Panc1 (cell line): ENCODE measurements at regions of chr11 and their contacts with region 1.

Region 1: DNA sequence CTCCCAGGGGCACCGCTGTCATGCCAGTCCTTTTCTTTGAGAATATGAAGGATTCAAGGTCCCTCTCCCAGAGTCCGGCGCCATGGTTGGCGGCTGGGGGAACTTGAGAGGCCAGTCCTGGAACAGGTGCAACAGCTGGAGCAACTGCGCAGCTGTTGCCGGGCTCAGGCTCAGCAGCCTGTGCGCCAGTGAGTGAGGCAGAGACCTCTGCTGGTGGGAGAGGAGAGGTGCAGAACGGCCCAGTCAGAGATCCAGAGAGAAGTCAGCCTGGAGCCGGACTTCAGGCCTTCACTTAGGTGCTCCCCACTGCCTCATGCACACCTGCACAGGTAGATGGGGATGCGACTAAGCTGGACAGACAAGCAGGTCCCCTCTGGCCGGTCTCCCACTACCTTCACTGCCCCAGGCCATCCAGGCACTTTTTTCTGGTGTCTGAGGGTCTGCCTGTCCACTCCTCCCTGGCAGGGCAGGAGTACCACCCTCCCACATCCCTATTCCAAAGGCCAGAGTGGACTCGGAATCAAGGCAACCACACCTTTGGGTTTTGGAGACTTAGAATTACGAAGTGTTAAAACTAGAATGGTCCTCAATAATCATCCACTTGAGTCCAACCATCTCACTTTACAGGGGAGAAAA is 4.6 kb downstream of the CHRDL2 start:
- DNase-seq: no peak
- ATAC-seq: peak; percentile 95
- H3K4me3 ChIP-seq: no peak overlapping the region
- H3K27ac ChIP-seq: no peak overlapping the region
- H3K4me1 ChIP-seq: 0 out of 2 replicates have a peak, but pooled peaks cover 4% of the 10 kb centered on the region
- H3K27me3 ChIP-seq: peaks cover 44% of the 10 kb centered on the region
- CTCF ChIP-seq: peak; percentile 98

Region 2: GRCh38 chr11:74611369-74611861 is 115.2 kb before region 1 on chr11:
- CTCF ChIA-PET with region 1: no interaction called
- POLR2A ChIA-PET with region 1: no interaction called
- in situ Hi-C with region 1: no loop called
- intact Hi-C with region 1: loop called (anchors 5 kb)
- DNase-seq: peak; percentile 25
- ATAC-seq: no peak
- H3K4me3 ChIP-seq: no peak overlapping the region
- H3K27ac ChIP-seq: no peak overlapping the region
- H3K4me1 ChIP-seq: no peaks in the 10 kb centered on the region
- H3K27me3 ChIP-seq: no peaks in the 10 kb centered on the region
- CTCF ChIP-seq: peak; percentile 68; the same call in 1 of the 2 replicates

Region 3: GRCh38 chr11:74634537-74634936 is 92.1 kb before region 1 on chr11:
- CTCF ChIA-PET with region 1: no interaction called
- POLR2A ChIA-PET with region 1: no interaction called
- in situ Hi-C with region 1: no loop called
- intact Hi-C with region 1: loop called (anchors 10 kb)
- DNase-seq: no peak
- ATAC-seq: peak; percentile 75
- H3K4me3 ChIP-seq: no peak overlapping the region
- H3K27ac ChIP-seq: no peak overlapping the region
- H3K4me1 ChIP-seq: no peaks in the 10 kb centered on the region
- H3K27me3 ChIP-seq: no peaks in the 10 kb centered on the region
- CTCF ChIP-seq: peak; percentile 67

Region 4: DNA sequence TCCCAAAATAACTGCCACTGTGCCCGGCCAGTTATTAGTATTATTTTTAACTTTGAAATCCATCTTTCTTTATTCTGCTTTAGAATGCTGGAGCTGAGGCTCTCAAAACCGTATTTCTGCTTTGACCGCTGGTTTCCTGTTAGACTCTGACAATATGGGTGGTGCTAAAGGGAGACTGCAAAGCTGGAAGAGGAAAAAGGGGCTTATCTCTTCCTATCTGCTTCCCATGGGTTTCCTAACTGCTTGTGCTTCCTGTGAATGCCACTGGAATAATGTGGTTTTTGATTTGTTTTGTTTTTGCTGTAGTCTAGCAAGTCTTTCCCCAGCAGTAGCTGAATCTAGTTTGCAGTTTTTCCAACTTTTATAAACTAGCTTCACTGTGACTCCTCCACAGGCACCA is 178.7 kb after region 1 on chr11:
- CTCF ChIA-PET with region 1: no interaction called
- POLR2A ChIA-PET with region 1: no interaction called
- in situ Hi-C with region 1: no loop called
- intact Hi-C with region 1: no loop called
- DNase-seq: no peak
- ATAC-seq: no peak
- H3K4me3 ChIP-seq: no peak overlapping the region
- H3K27ac ChIP-seq: no peak overlapping the region
- H3K4me1 ChIP-seq: no peaks in the 10 kb centered on the region
- H3K27me3 ChIP-seq: no peaks in the 10 kb centered on the region
- CTCF ChIP-seq: no peak